Activated B cell treated with CpG ODN at 0.5 μM for 24 hours (primary cell): ENCODE measurements at regions of chr2 and their contacts with region 1.

Region 1: DNA sequence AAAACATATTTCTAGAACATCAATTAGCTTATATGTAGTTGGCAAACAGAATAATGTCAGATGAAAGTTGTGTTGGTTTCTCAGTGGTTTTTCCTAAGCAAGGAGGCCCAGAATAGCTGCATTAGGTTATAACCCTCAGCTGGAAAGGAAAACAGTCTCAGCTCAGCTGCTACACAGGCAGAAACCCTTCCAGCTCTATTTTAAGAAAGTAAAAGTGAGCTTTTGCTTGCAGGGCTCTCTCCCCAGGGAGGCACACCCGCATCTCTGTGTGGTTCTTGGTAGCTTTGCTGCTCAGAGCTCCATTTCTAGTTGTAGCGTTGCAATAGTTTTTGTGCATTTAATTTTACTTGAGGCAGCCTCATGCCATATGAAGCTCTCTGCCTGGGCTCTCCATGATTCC is 54.6 kb downstream of the PIKFYVE start:
- DNase-seq: no peak
- ATAC-seq: peak; percentile 82
- H3K4me3 Mint-ChIP-seq: peak overlapping the region; percentile 62
- H3K27ac Mint-ChIP-seq: peak overlapping the region; percentile 74
- H3K4me1 Mint-ChIP-seq: peaks cover 70% of the 10 kb centered on the region
- H3K27me3 Mint-ChIP-seq: no peaks in the 10 kb centered on the region
- CTCF ChIP-seq: no peak

Region 2: GRCh38 chr2:208175069-208175839 is 145.4 kb before region 1 on chr2:
- CTCF ChIA-PET with region 1: interaction called, 3 read pairs
- POLR2A ChIA-PET with region 1: no interaction called
- intact Hi-C with region 1: loop called (anchors 2 kb)
- DNase-seq: peak; percentile 19
- ATAC-seq: peak; percentile 94
- H3K4me3 Mint-ChIP-seq: no peak overlapping the region
- H3K27ac Mint-ChIP-seq: no peak overlapping the region
- H3K4me1 Mint-ChIP-seq: peaks cover 4% of the 10 kb centered on the region
- H3K27me3 Mint-ChIP-seq: peaks cover 14% of the 10 kb centered on the region
- CTCF ChIP-seq: peak; percentile 62

Region 3: DNA sequence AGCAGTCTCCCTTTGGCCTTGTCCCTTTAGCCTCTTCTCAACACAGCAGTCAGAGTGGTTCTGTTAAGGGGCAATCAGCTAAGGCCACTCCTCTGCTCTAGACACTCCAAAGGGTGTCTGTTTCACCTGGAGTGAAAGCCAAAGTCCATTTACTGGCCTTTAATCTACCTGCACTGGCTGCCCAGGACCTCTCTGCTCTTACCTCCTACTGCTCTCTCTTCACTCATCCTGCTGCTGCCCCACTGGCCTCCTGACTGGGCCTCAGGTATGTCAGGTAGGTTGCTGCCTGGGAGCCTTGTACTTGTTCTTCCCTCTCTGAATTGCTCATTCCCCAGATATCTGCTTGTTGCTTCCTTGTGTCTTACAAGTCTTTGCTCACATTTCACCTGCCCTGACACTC is 13.5 kb after region 1 on chr2:
- CTCF ChIA-PET with region 1: no interaction called
- POLR2A ChIA-PET with region 1: interaction called, 3 read pairs
- intact Hi-C with region 1: loop called (anchors 2 kb)
- DNase-seq: no peak
- ATAC-seq: no peak
- H3K4me3 Mint-ChIP-seq: no peak overlapping the region
- H3K27ac Mint-ChIP-seq: no peak overlapping the region
- H3K4me1 Mint-ChIP-seq: peaks cover 6% of the 10 kb centered on the region
- H3K27me3 Mint-ChIP-seq: no peaks in the 10 kb centered on the region
- CTCF ChIP-seq: no peak

Region 4: DNA sequence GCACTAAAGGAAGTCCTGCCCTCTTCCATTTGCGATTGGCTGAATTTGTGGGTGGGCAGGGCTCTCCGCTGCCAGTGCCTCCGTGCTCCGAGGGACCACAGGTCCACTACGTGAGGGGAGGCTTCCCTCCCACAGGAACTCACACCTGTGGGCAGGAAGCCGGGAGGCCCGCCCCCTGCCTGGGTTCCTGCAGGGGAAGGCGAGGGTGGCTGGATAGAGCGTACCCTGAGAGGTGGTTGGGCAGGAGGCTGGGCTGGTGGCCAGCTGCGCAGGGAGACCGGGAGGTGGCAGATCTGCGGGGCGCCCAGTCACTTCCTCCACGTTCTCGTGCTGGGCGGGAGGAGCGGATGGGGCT is 38.9 kb after region 1 on chr2:
- CTCF ChIA-PET with region 1: no interaction called
- POLR2A ChIA-PET with region 1: interaction called, 3 read pairs
- intact Hi-C with region 1: loop called (anchors 5 kb)
- DNase-seq: no peak
- ATAC-seq: peak; percentile 70
- H3K4me3 Mint-ChIP-seq: peak overlapping the region; percentile 65
- H3K27ac Mint-ChIP-seq: no peak overlapping the region
- H3K4me1 Mint-ChIP-seq: peaks cover 10% of the 10 kb centered on the region
- H3K27me3 Mint-ChIP-seq: no peaks in the 10 kb centered on the region
- CTCF ChIP-seq: no peak